ENCODE measurements at regions of chr9 and their contacts with region 1.

Region 1: GRCh38 chr9:20139763-20140290 is 351.0 kb upstream of the SLC24A2 start:
- DNase-seq: no peak
- ATAC-seq: no peak
- H3K4me3 ChIP-seq: no peak overlapping the region
- H3K27ac ChIP-seq: no peak overlapping the region
- H3K4me1 ChIP-seq: no peaks in the 10 kb centered on the region
- H3K27me3 ChIP-seq: no peaks in the 10 kb centered on the region
- CTCF ChIP-seq: no peak

Region 2: DNA sequence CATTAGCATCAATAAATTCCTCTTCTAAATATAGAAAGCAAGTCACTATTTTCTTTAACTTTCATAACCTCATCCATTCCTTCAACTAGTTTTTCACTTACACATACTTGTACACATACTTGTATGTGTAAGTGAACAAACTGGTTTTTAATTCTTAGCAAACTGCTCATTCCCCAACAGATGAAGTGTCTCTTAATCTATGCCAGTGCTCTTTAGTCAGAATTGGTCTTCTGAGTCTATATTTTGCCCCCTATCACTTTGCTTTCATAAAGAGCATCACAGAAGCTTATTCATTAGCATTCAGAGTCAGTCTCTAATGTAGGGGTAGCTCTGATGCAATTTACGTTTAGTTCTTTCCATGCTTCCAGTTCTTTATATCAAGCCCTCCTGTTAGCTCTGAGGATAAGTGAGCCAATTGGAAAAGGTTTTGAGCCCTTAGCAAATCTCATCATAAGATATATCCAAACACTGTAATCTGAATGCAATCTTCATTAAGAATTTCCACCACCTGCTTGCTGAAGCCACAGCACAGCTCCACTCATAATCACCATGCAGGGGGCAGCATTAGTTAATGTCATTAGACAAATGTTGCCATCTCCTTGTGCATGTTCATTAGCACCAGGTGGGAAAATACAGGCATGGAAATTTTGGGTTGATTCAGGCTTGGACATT is 172.5 kb before region 1 on chr9:
- intact Hi-C with region 1: no loop called
- DNase-seq: no peak
- ATAC-seq: no peak
- H3K4me3 ChIP-seq: no peak overlapping the region
- H3K27ac ChIP-seq: no peak overlapping the region
- H3K4me1 ChIP-seq: no peaks in the 10 kb centered on the region
- H3K27me3 ChIP-seq: peaks cover 0 to 5% (median 0%) of the 10 kb centered on the region in 7 donors
- CTCF ChIP-seq: peak in 3 of 9 donors; percentile 6 to 43 (median 24)

Region 3: GRCh38 chr9:20070336-20070735 is 69.5 kb before region 1 on chr9:
- intact Hi-C with region 1: loop called in 1 of 10 experiments (anchors 10 kb)
- DNase-seq: no peak
- ATAC-seq: no peak
- H3K4me3 ChIP-seq: no peak overlapping the region
- H3K27ac ChIP-seq: no peak overlapping the region
- H3K4me1 ChIP-seq: peaks cover 0 to 14% (median 5%) of the 10 kb centered on the region in 9 donors
- H3K27me3 ChIP-seq: no peaks in the 10 kb centered on the region
- CTCF ChIP-seq: no peak